CD4-positive, alpha-beta T cell (primary cell): ENCODE measurements at regions of chr16 and their contacts with region 1.

Region 1: GRCh38 chr16:77971306-77972271 is 50.8 kb upstream of the CLEC3A start:
- DNase-seq: peak; percentile 53 to 80 (median 67)
- ATAC-seq: peak; percentile 32
- H3K4me3 ChIP-seq: no peak overlapping the region
- H3K4me3 Mint-ChIP-seq: no peak overlapping the region
- H3K27ac ChIP-seq: no peak overlapping the region
- H3K27ac Mint-ChIP-seq: no peak overlapping the region
- H3K4me1 ChIP-seq: no peaks in the 10 kb centered on the region
- H3K4me1 Mint-ChIP-seq: no peaks in the 10 kb centered on the region
- H3K27me3 ChIP-seq: no peaks in the 10 kb centered on the region
- H3K27me3 Mint-ChIP-seq: peaks cover 36% of the 10 kb centered on the region
- CTCF ChIP-seq: peak; percentile 64

Region 2: GRCh38 chr16:77236063-77236511 is 735.5 kb before region 1 on chr16:
- CTCF ChIA-PET with region 1: no interaction called
- POLR2A ChIA-PET with region 1: no interaction called
- intact Hi-C with region 1: loop called in 1 of 2 experiments (anchors 10 kb)
- DNase-seq: peak; percentile 80 to 93 (median 85)
- ATAC-seq: peak; percentile 99
- H3K4me3 ChIP-seq: peak overlapping the region; percentile 1
- H3K4me3 Mint-ChIP-seq: peak overlapping the region; percentile 57
- H3K27ac ChIP-seq: no peak overlapping the region
- H3K27ac Mint-ChIP-seq: no peak overlapping the region
- H3K4me1 ChIP-seq: peaks cover 8% of the 10 kb centered on the region
- H3K4me1 Mint-ChIP-seq: peaks cover 7% of the 10 kb centered on the region
- H3K27me3 ChIP-seq: peaks cover 3 to 10% of the 10 kb centered on the region in 2 experiments
- H3K27me3 Mint-ChIP-seq: peaks cover 27% of the 10 kb centered on the region
- CTCF ChIP-seq: peak; percentile 100

Region 3: DNA sequence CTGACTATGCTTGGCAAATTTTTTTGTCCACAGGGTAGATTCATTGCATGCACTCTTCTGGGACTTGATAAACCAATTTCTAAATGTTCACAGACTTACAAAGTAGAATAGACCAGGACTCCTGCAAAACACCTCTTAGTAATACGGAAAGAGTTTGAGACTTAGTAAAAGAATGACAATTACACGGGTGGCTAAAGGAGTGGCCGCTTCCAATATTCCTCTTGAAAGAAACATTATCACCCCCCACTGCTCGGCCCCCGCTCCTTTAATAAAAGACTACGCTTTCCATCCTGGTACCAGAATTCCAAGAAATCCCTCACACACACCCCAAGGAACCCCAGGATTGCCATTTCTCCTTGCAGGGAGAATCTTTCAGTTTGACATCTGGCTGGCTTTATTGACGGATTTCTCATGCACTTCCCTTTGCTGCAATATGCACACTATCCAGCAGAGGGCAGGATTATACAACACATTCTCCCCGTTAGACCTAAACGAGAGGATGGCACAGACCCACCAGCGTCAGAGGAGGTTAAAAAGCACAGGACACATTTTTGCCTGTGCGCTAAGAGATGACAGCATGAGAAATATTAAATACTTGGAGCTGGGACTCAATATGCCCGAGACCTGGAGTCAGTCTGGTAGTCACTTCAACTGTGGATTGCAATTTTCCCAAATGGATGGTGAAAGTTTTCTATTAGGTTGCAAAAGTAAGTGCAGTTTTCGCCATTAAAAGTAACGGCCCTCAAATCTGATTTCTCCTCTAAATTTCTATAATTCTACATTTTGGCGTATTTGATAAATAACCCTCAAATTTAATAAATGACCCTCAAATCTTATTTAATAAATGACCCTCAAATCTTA is 295.9 kb before region 1 on chr16:
- CTCF ChIA-PET with region 1: no interaction called
- POLR2A ChIA-PET with region 1: no interaction called
- intact Hi-C with region 1: loop called (anchors 1 kb)
- DNase-seq: peak; percentile 20 to 77 (median 46)
- ATAC-seq: peak; percentile 68
- H3K4me3 ChIP-seq: no peak overlapping the region
- H3K4me3 Mint-ChIP-seq: no peak overlapping the region
- H3K27ac ChIP-seq: no peak overlapping the region
- H3K27ac Mint-ChIP-seq: no peak overlapping the region
- H3K4me1 ChIP-seq: no peaks in the 10 kb centered on the region
- H3K4me1 Mint-ChIP-seq: no peaks in the 10 kb centered on the region
- H3K27me3 ChIP-seq: peaks cover 0 to 10% of the 10 kb centered on the region in 2 experiments
- H3K27me3 Mint-ChIP-seq: peaks cover 10% of the 10 kb centered on the region
- CTCF ChIP-seq: peak; percentile 92

Region 4: GRCh38 chr16:77951775-77952174 is 19.8 kb before region 1 on chr16:
- CTCF ChIA-PET with region 1: no interaction called
- POLR2A ChIA-PET with region 1: no interaction called
- intact Hi-C with region 1: no loop called
- DNase-seq: peak in 1 of 14 experiments; percentile 25
- ATAC-seq: no peak
- H3K4me3 ChIP-seq: no peak overlapping the region
- H3K4me3 Mint-ChIP-seq: no peak overlapping the region
- H3K27ac ChIP-seq: no peak overlapping the region
- H3K27ac Mint-ChIP-seq: no peak overlapping the region
- H3K4me1 ChIP-seq: no peaks in the 10 kb centered on the region
- H3K4me1 Mint-ChIP-seq: no peaks in the 10 kb centered on the region
- H3K27me3 ChIP-seq: peaks cover 6 to 20% of the 10 kb centered on the region in 2 experiments
- H3K27me3 Mint-ChIP-seq: peaks cover 38% of the 10 kb centered on the region
- CTCF ChIP-seq: no peak

Region 5: GRCh38 chr16:78045865-78046581 is 74.4 kb after region 1 on chr16:
- CTCF ChIA-PET with region 1: no interaction called
- POLR2A ChIA-PET with region 1: no interaction called
- intact Hi-C with region 1: loop called in 1 of 2 experiments (anchors 2 kb)
- DNase-seq: peak in 6 of 14 experiments; percentile 1 to 25 (median 13)
- ATAC-seq: no peak
- H3K4me3 ChIP-seq: no peak overlapping the region
- H3K4me3 Mint-ChIP-seq: no peak overlapping the region
- H3K27ac ChIP-seq: no peak overlapping the region
- H3K27ac Mint-ChIP-seq: no peak overlapping the region
- H3K4me1 ChIP-seq: no peaks in the 10 kb centered on the region
- H3K4me1 Mint-ChIP-seq: no peaks in the 10 kb centered on the region
- H3K27me3 ChIP-seq: peaks cover 21 to 23% of the 10 kb centered on the region in 2 experiments
- H3K27me3 Mint-ChIP-seq: peaks cover 50% of the 10 kb centered on the region
- CTCF ChIP-seq: no peak

Region 6: GRCh38 chr16:78116946-78117345 is 145.4 kb after region 1 on chr16:
- CTCF ChIA-PET with region 1: no interaction called
- POLR2A ChIA-PET with region 1: no interaction called
- intact Hi-C with region 1: no loop called
- DNase-seq: no peak
- ATAC-seq: no peak
- H3K4me3 ChIP-seq: no peak overlapping the region
- H3K4me3 Mint-ChIP-seq: no peak overlapping the region
- H3K27ac ChIP-seq: no peak overlapping the region
- H3K27ac Mint-ChIP-seq: no peak overlapping the region
- H3K4me1 ChIP-seq: no peaks in the 10 kb centered on the region
- H3K4me1 Mint-ChIP-seq: no peaks in the 10 kb centered on the region
- H3K27me3 ChIP-seq: no peaks in the 10 kb centered on the region
- H3K27me3 Mint-ChIP-seq: no peaks in the 10 kb centered on the region
- CTCF ChIP-seq: no peak